ENCODE measurements at regions of chr16 and their contacts with region 1.

Region 1: GRCh38 chr16:52131206-52131605 is 415.7 kb downstream of the TOX3 start:
- DNase-seq: no peak
- H3K4me3 Mint-ChIP-seq: no peak overlapping the region
- H3K27ac Mint-ChIP-seq: no peak overlapping the region
- H3K4me1 Mint-ChIP-seq: peaks cover 13% of the 10 kb centered on the region
- H3K27me3 Mint-ChIP-seq: no peaks in the 10 kb centered on the region
- CTCF ChIP-seq: no peak

Region 2: DNA sequence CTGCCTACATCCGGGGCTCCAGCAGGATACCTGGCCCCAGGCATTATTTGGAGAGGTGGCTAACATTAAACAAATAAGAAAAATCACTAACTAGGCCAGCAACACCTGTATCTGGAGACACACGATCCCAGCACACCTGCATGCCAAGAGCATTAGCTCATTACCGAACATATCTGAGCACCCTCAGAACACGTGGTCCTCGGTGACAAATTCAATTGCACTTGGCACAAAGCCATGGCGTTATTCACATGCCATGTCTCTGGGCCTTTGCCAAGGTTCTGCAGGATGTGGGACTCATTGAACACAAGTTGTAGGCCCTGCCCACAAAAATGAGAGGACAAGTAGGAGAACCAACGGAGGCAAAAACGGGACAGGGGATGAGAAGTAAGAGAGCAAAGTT is 136.6 kb before region 1 on chr16:
- CTCF ChIA-PET with region 1: no interaction called
- intact Hi-C with region 1: no loop called
- DNase-seq: peak; percentile 98
- H3K4me3 Mint-ChIP-seq: peak overlapping the region; percentile 3
- H3K27ac Mint-ChIP-seq: peak overlapping the region; percentile 18
- H3K4me1 Mint-ChIP-seq: peaks cover 58% of the 10 kb centered on the region
- H3K27me3 Mint-ChIP-seq: no peaks in the 10 kb centered on the region
- CTCF ChIP-seq: no peak

Region 3: DNA sequence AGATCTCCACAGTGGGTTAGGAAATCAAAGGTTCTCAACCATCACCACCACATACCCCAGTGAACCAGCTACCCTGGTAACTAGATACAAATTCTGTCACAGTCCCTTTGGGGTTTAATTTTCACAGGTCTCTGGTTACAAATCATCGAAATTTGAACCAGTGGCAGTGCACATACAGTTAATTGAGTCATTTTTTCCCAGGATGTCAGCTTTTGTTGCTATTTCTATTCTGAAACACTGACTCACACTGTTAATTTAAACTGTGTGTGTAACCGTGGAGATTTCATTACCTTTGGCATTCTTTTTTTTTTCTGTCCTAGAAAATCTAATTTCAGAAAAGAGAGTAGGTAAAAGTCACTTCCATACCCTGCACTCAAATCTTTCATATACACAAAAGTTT is 95.8 kb before region 1 on chr16:
- CTCF ChIA-PET with region 1: no interaction called
- intact Hi-C with region 1: no loop called
- DNase-seq: no peak
- H3K4me3 Mint-ChIP-seq: no peak overlapping the region
- H3K27ac Mint-ChIP-seq: no peak overlapping the region
- H3K4me1 Mint-ChIP-seq: no peaks in the 10 kb centered on the region
- H3K27me3 Mint-ChIP-seq: no peaks in the 10 kb centered on the region
- CTCF ChIP-seq: no peak

Region 4: GRCh38 chr16:52101246-52101645 is 30.0 kb before region 1 on chr16:
- CTCF ChIA-PET with region 1: interaction called, 11 read pairs
- intact Hi-C with region 1: no loop called
- DNase-seq: no peak
- H3K4me3 Mint-ChIP-seq: no peak overlapping the region
- H3K27ac Mint-ChIP-seq: no peak overlapping the region
- H3K4me1 Mint-ChIP-seq: no peaks in the 10 kb centered on the region
- H3K27me3 Mint-ChIP-seq: no peaks in the 10 kb centered on the region
- CTCF ChIP-seq: no peak